Natural killer cell (primary cell): ENCODE measurements at regions of chr19 and their contacts with region 1.

Region 1: GRCh38 chr19:40465557-40466150 is at the start of gene BLVRB:
- DNase-seq: peak; percentile 100
- ATAC-seq: peak; percentile 62 to 87 (median 69)
- H3K4me3 ChIP-seq: peak within 1 kb of the TSS; percentile 70
- H3K4me3 Mint-ChIP-seq: peak within 1 kb of the TSS; percentile 84
- H3K27ac ChIP-seq: peak within 1 kb of the TSS; percentile 81
- H3K27ac Mint-ChIP-seq: peak within 1 kb of the TSS; percentile 88 to 93
- H3K4me1 ChIP-seq: peaks cover 37% of the 10 kb centered on the region
- H3K4me1 Mint-ChIP-seq: peaks cover 23 to 26% of the 10 kb centered on the region in 2 donors
- H3K27me3 ChIP-seq: peaks cover 6% of the 10 kb centered on the region
- H3K27me3 Mint-ChIP-seq: peaks cover 8 to 13% of the 10 kb centered on the region in 2 donors
- CTCF ChIP-seq: no peak
- total RNA-seq, gene BLVRB: 16.8 to 25.2 (median 18.3) TPM

Region 2: DNA sequence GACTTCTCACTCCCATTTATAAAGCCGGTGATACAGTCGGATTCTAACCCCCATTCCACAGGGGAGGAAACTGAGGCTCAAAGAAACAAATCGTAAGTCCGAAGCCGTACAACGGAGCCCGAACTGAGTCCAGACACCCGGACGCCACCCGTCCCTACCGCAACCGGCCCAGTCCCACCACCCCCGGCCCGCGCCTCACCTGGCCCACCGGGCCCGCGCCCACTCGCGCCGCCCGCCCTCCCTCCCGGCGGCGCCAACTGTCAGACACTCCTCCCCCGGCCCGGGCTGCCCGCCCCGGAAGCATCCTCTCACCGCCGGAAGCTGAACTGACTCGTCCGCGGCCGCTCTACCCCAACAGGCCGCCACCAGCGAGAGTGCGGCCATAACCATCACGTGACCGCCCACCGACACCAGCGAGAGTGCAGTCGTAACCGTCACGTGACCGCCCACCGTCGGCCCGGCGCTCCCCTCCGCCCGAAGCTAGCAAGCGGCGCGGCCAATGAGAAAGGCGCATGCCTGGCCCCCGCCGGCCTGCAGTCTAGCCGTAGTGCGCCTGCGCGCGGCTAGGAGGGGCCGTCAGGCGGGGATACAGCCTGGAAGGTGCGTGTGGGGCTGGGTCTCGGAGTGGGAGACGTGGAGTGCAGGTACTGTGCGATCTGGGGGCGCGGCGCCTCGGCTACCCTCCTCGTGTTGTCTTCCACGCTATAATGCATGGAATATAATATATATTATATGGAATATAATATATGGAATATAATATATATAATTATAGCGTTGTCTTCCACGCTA is 117.3 kb before region 1 on chr19 and contains the starts of genes C19orf47 and PLD3:
- intact Hi-C with region 1: loop called (anchors 5 kb)
- DNase-seq: peak; percentile 96 to 99
- ATAC-seq: peak; percentile 91 to 98 (median 93)
- H3K4me3 ChIP-seq: peak within 1 kb of the TSS; percentile 63
- H3K4me3 Mint-ChIP-seq: peak within 1 kb of the TSS; percentile 89
- H3K27ac ChIP-seq: peak within 1 kb of the TSS; percentile 68
- H3K27ac Mint-ChIP-seq: peak within 1 kb of the TSS; percentile 79 to 87
- H3K4me1 ChIP-seq: peaks cover 18% of the 10 kb centered on the region
- H3K4me1 Mint-ChIP-seq: peaks cover 27 to 31% of the 10 kb centered on the region in 2 donors
- H3K27me3 ChIP-seq: no peaks in the 10 kb centered on the region
- H3K27me3 Mint-ChIP-seq: no peaks in the 10 kb centered on the region
- CTCF ChIP-seq: no peak
- total RNA-seq, gene C19orf47: 15.2 to 20.2 (median 16.1) TPM
- total RNA-seq, gene PLD3: 107 to 140 (median 109) TPM

Region 3: GRCh38 chr19:40444192-40445028 is 21.2 kb before region 1 on chr19 and contains the start of gene SERTAD3:
- intact Hi-C with region 1: loop called (anchors 1 kb)
- DNase-seq: peak; percentile 98
- ATAC-seq: peak; percentile 70 to 87 (median 74)
- H3K4me3 ChIP-seq: peak within 1 kb of the TSS; percentile 91
- H3K4me3 Mint-ChIP-seq: peak within 1 kb of the TSS; percentile 98
- H3K27ac ChIP-seq: peak within 1 kb of the TSS; percentile 89
- H3K27ac Mint-ChIP-seq: peak within 1 kb of the TSS; percentile 92 to 97
- H3K4me1 ChIP-seq: peaks cover 13% of the 10 kb centered on the region
- H3K4me1 Mint-ChIP-seq: peaks cover 25 to 29% of the 10 kb centered on the region in 2 donors
- H3K27me3 ChIP-seq: no peaks in the 10 kb centered on the region
- H3K27me3 Mint-ChIP-seq: no peaks in the 10 kb centered on the region
- CTCF ChIP-seq: no peak
- total RNA-seq, gene SERTAD3: 57.3 to 102 (median 83.3) TPM

Region 4: GRCh38 chr19:40502647-40503319 is 37.1 kb after region 1 on chr19:
- intact Hi-C with region 1: no loop called
- DNase-seq: no peak
- ATAC-seq: no peak
- H3K4me3 ChIP-seq: no peak overlapping the region
- H3K4me3 Mint-ChIP-seq: no peak overlapping the region
- H3K27ac ChIP-seq: no peak overlapping the region
- H3K27ac Mint-ChIP-seq: no peak overlapping the region
- H3K4me1 ChIP-seq: no peaks in the 10 kb centered on the region
- H3K4me1 Mint-ChIP-seq: no peaks in the 10 kb centered on the region
- H3K27me3 ChIP-seq: no peaks in the 10 kb centered on the region
- H3K27me3 Mint-ChIP-seq: peaks cover 6 to 20% of the 10 kb centered on the region in 2 donors
- CTCF ChIP-seq: no peak

Region 5: DNA sequence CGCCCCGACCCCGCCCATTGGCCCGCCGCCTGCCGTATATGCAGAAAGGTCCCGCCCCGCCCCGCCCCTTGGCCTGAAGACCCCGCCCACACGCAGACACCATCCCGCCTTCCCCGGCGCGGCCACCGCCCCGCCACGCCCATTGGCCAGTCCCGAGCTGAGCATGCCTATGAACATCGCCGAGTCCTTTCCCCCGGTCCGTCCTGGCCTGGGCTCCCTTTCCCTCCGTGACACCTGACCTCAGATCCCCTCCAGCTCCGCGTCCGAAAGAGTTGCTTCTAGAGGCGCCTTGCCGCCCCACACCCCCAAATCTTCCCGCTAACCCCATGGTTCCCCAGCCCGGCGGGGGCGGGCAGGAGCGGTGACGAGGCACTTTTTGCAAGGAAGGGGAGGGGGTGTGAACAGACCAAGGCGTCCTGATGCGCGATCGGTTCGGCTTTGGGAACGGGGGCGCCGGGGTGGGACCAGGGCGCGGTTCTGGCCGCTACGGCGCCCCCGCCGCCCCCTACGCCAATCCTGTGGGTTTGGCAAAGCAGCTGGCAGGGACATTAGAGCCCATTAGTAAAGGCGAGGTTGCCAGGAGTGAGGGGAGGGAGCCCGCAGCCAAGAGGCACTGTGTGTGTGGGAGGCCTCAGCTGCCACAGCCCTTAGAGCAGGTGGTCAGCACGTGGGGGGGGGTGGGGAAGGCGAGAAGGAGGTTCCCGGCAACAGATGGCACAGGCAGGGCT is 225.2 kb after region 1 on chr19:
- intact Hi-C with region 1: loop called (anchors 1 kb)
- DNase-seq: peak; percentile 74 to 92
- ATAC-seq: peak; percentile 56 to 82 (median 65)
- H3K4me3 ChIP-seq: peak overlapping the region; percentile 34
- H3K4me3 Mint-ChIP-seq: peak overlapping the region; percentile 90
- H3K27ac ChIP-seq: peak overlapping the region; percentile 39
- H3K27ac Mint-ChIP-seq: peak overlapping the region; percentile 77 to 94
- H3K4me1 ChIP-seq: peaks cover 45% of the 10 kb centered on the region
- H3K4me1 Mint-ChIP-seq: peaks cover 0 to 12% of the 10 kb centered on the region in 2 donors
- H3K27me3 ChIP-seq: no peaks in the 10 kb centered on the region
- H3K27me3 Mint-ChIP-seq: no peaks in the 10 kb centered on the region
- CTCF ChIP-seq: no peak

Region 6: DNA sequence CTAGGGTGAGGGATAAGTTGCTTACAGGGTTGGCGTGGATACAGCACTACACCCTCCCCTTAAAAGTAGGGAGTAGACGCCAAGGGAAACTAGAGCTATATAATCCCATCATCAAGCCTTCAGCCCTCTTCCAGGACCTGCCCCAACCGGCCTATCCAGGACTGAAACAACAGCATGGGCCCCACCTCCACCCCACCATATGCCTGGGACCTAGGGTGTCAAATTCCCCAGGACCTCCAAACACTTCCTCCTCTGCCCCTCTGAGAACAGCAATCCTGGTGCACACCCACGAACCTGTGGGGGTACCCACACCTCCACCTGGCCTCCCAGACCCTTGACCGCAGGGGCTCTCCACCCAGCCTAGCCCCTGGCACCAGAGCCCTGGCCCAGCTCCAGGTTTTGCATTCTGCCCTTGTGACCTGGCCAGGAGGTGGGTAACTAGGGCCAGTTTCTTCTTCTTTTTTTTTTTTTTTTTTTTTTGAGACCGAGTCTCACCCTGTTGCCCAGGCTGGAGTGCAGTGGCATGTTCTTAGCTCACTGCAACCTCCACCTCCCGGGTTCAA is 647.2 kb after region 1 on chr19:
- intact Hi-C with region 1: no loop called
- DNase-seq: no peak
- ATAC-seq: no peak
- H3K4me3 ChIP-seq: no peak overlapping the region
- H3K4me3 Mint-ChIP-seq: no peak overlapping the region
- H3K27ac ChIP-seq: no peak overlapping the region
- H3K27ac Mint-ChIP-seq: no peak overlapping the region
- H3K4me1 ChIP-seq: no peaks in the 10 kb centered on the region
- H3K4me1 Mint-ChIP-seq: peaks cover 0 to 6% of the 10 kb centered on the region in 2 donors
- H3K27me3 ChIP-seq: no peaks in the 10 kb centered on the region
- H3K27me3 Mint-ChIP-seq: peaks cover 0 to 3% of the 10 kb centered on the region in 2 donors
- CTCF ChIP-seq: no peak

Region 7: DNA sequence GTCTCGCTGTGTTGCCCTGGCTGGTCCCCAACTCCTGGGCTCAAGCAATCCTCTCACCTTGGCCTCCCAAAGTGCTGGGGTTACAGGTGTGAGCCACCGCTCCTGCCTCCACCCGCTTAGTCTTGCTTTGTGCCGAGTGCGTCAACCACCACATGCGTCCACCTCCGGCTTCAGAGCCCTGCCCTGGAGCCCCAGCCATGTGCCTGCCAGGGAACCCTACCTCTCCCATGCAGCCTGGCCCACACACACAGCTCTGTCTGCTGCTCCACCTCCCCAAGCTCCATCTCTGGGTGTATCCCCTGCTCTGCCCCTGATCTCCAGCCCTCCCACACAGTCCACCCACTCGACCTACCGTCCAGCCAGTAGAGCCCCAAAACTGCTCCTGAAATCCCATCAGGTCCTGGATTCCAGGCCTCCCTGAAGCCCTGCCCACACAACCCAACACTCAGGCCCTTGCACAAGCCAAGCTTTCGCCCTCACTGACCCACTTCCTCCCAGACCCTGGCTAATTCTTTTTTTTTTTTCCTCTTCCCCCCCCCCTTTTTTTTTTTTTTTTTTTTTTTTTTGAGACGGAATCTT is 658.2 kb after region 1 on chr19:
- intact Hi-C with region 1: loop called (anchors 5 kb)
- DNase-seq: no peak
- ATAC-seq: no peak
- H3K4me3 ChIP-seq: no peak overlapping the region
- H3K4me3 Mint-ChIP-seq: peak overlapping the region; percentile 28
- H3K27ac ChIP-seq: no peak overlapping the region
- H3K27ac Mint-ChIP-seq: peak overlapping the region; percentile 67 to 96
- H3K4me1 ChIP-seq: peaks cover 53% of the 10 kb centered on the region
- H3K4me1 Mint-ChIP-seq: peaks cover 45 to 70% of the 10 kb centered on the region in 2 donors
- H3K27me3 ChIP-seq: no peaks in the 10 kb centered on the region
- H3K27me3 Mint-ChIP-seq: peaks cover 0 to 4% of the 10 kb centered on the region in 2 donors
- CTCF ChIP-seq: no peak